Activated CD4-positive, alpha-beta T cell treated with anti-CD3 and anti-CD28 coated beads, Interleukin-2, amount 10 ng/mL, durations not matched to agents 7 days and 5 days (primary cell): ENCODE measurements at regions of chr19 and their contacts with region 1.

Region 1: GRCh38 chr19:49570138-49570856 is 10.1 kb downstream of the NOSIP start:
- DNase-seq: peak; percentile 88
- H3K4me3 Mint-ChIP-seq: peak overlapping the region; percentile 51
- H3K27ac Mint-ChIP-seq: peak overlapping the region; percentile 98
- H3K4me1 Mint-ChIP-seq: peaks cover 70% of the 10 kb centered on the region
- H3K27me3 Mint-ChIP-seq: no peaks in the 10 kb centered on the region

Region 2: DNA sequence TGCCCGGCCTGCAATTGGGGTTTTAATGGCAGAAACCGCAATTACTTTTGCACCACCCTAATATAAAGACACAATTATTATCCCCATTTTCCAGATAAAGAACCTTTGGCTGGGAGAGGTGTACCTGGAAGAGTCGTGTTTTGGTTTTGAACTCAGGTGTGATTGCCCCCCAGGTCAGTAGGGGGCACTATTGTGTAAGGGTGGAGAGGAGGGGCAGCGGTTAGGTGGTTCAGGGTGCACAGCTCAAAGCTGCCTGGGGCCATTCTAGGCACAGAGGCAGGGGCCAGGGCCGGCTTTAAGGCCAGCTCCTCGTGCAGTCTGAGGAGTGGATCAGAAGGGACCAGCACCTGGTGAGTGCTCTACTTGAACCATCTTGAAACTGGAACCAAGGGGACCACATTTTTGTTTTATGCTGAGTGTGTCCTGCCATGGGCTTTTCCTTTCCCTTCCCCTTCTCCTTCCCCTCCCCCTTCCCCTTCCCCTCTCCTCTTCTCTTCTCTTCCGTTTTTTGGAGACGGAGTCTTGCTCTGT is 63.7 kb before region 1 on chr19:
- CTCF ChIA-PET with region 1: interaction called, 25 read pairs
- POLR2A ChIA-PET with region 1: no interaction called
- DNase-seq: peak; percentile 86
- H3K4me3 Mint-ChIP-seq: peak overlapping the region; percentile 41
- H3K27ac Mint-ChIP-seq: no peak overlapping the region
- H3K4me1 Mint-ChIP-seq: peaks cover 40% of the 10 kb centered on the region
- H3K27me3 Mint-ChIP-seq: no peaks in the 10 kb centered on the region

Region 3: DNA sequence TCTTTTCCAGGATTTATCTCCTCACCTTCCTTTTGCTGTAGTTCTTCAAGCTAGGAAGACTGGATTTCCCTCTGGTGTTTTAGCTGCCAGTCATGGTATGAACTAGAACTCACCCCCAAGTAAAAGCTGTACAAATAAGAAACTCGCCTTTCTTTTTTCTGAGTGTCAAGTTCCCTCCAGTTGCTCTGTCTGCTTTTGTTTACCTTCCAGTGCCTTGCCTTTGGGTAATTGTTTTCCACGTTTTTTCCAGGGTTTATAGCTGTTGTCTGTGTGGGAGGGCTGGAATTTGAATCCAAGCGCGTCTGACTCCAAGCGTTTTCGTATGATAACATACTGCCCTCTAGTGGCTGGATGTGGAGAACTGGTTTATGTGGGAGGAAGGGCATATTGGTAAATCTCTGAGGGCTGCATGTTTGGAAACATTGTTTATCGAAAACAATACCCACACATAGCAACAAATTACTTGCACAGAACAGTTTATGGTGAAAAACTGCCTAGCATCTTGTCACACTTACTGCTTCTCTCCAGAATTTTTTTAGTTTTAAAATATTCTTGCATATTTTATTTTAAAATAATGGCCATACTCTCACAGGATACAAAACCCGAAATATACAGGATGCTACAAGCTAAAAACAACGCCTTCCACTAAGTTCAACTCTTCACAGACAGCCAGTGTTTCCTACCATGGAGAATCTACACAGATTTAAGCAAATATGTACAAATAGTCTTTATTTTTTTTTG is 23.3 kb before region 1 on chr19:
- CTCF ChIA-PET with region 1: interaction called, 33 read pairs
- POLR2A ChIA-PET with region 1: no interaction called
- DNase-seq: peak; percentile 85
- H3K4me3 Mint-ChIP-seq: peak overlapping the region; percentile 60
- H3K27ac Mint-ChIP-seq: peak overlapping the region; percentile 70
- H3K4me1 Mint-ChIP-seq: peaks cover 61% of the 10 kb centered on the region
- H3K27me3 Mint-ChIP-seq: no peaks in the 10 kb centered on the region

Region 4: DNA sequence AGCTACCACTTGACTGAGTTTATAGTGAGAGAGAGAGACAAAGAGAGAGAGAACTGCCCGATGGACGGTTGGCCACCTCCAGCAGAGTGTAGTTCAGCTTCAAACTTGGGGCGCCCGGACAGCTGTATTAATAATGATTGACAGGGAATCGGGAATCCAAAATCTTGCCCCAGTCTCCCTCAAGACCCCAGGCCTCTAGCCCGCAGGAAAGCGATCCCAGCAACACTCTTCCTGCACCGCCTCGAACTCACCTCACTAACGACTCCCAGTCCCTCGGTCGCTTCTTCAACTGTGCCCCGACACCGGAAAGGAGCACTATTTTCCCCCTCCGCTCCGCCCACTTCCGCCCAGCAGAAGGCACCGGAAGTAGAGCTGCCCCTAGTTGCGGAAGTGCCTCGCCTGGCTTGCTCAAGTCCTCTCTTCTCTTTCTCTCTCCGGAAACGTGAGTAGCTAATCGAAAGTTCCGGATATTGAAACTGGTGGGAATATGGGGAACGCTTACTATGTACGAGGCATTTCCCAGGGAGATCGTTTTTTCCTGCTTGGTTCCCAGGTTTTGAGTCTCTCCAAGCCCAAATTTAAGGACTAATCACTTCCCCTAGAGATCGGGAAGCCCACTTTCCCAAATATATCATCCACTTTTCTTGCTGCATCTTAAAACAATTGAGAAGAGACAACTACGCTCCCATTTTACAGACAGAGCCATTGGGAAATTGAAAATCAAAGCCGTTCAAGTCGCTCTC is 10.1 kb after region 1 on chr19 and contains the start of gene NOSIP:
- CTCF ChIA-PET with region 1: interaction called, 35 read pairs
- POLR2A ChIA-PET with region 1: no interaction called
- DNase-seq: peak; percentile 97
- H3K4me3 Mint-ChIP-seq: peak within 1 kb of the TSS; percentile 84
- H3K27ac Mint-ChIP-seq: peak within 1 kb of the TSS; percentile 80
- H3K4me1 Mint-ChIP-seq: peaks cover 33% of the 10 kb centered on the region
- H3K27me3 Mint-ChIP-seq: no peaks in the 10 kb centered on the region
- total RNA-seq, gene NOSIP: 288 TPM

Region 5: GRCh38 chr19:49691243-49692146 is 121.2 kb after region 1 on chr19:
- CTCF ChIA-PET with region 1: no interaction called
- POLR2A ChIA-PET with region 1: no interaction called
- DNase-seq: no peak
- H3K4me3 Mint-ChIP-seq: peak overlapping the region; percentile 77
- H3K27ac Mint-ChIP-seq: no peak overlapping the region
- H3K4me1 Mint-ChIP-seq: peaks cover 27% of the 10 kb centered on the region
- H3K27me3 Mint-ChIP-seq: peaks cover 24% of the 10 kb centered on the region